ENCODE measurements at regions of chr5 and their contacts with region 1.

Region 1: GRCh38 chr5:181260387-181261319 is at the start of gene TRIM52:
- DNase-seq: peak; percentile 89 to 92
- ATAC-seq: peak; percentile 81 to 89
- H3K4me3 ChIP-seq: peak within 1 kb of the TSS; percentile 88 to 100 (median 94)
- H3K27ac ChIP-seq: peak within 1 kb of the TSS; percentile 95 to 100 (median 99)
- H3K4me1 ChIP-seq: peaks cover 53 to 60% of the 10 kb centered on the region in 2 donors
- H3K27me3 ChIP-seq: no peaks in the 10 kb centered on the region
- CTCF ChIP-seq: no peak
- POLR2A ChIP-seq: peak; percentile 96
- total RNA-seq, gene TRIM52: 1.3 to 4.9 (median 3.4) TPM

Region 2: GRCh38 chr5:180494060-180494509 is 766.6 kb before region 1 on chr5 and contains the start of gene CNOT6:
- in situ Hi-C with region 1: no loop called
- intact Hi-C with region 1: loop called (anchors 10 kb)
- DNase-seq: peak; percentile 80 to 87
- ATAC-seq: peak; percentile 92 to 94
- H3K4me3 ChIP-seq: peak within 1 kb of the TSS; percentile 69 to 93 (median 82)
- H3K27ac ChIP-seq: peak within 1 kb of the TSS; percentile 69 to 92 (median 80)
- H3K4me1 ChIP-seq: peaks cover 22 to 29% of the 10 kb centered on the region in 2 donors
- H3K27me3 ChIP-seq: no peaks in the 10 kb centered on the region
- CTCF ChIP-seq: no peak
- POLR2A ChIP-seq: peak; percentile 23 to 61
- total RNA-seq, gene CNOT6: 4.1 to 12.0 (median 6.4) TPM

Region 3: DNA sequence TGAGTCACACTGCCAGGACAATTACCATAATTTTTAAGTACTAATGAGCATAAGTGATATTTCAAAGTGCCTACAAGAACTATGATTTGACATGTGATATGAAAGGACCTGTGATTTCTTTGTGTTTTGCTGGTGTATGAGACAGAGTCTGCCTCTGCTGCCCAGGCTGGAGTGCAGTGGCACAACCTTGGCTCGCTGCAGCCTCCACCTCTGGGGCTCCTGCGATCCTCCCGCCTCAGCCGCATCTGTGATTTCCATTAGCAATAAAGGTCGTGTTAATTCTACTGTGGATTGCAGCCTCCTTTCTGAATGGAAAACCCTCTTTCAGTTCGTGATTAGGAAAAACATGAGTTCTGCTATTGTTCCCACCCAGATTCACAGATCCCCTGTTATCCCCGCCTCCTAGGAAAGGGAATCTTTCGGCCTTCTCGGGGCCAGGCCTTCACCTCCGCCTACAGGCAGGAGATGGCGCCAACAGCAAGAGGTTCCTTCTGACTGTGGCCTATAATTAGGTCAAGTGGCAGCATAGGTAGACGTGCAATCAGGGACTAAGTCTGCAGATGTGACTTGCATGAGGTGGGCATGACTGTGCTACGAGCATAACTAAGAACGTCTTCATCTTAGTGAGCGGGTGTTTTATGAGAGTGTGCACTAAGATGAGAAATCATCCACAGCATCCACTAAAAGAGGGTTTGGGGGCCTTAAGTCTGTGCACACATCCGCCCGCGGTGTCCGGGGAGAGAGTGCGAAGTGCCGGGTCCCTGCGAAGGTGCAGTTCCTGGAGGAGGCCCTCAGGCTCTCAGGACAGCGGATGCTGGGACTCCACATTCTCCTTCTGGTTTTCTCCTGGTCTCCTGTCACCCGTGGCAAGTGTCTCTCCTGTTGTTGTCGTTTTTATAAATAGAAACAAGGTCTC is 78.7 kb before region 1 on chr5:
- in situ Hi-C with region 1: loop called in 2 of 4 experiments (anchors 10 kb)
- intact Hi-C with region 1: loop called (anchors 1 kb)
- DNase-seq: peak in 1 of 2 donors; percentile 70
- ATAC-seq: peak; percentile 88 to 89
- H3K4me3 ChIP-seq: no peak overlapping the region
- H3K27ac ChIP-seq: peak overlapping the region in 3 of 4 donors; percentile 28 to 48 (median 41)
- H3K4me1 ChIP-seq: peaks cover 4 to 7% of the 10 kb centered on the region in 2 donors
- H3K27me3 ChIP-seq: no peaks in the 10 kb centered on the region
- CTCF ChIP-seq: peak; percentile 76 to 88 (median 79)
- POLR2A ChIP-seq: no peak

Region 4: DNA sequence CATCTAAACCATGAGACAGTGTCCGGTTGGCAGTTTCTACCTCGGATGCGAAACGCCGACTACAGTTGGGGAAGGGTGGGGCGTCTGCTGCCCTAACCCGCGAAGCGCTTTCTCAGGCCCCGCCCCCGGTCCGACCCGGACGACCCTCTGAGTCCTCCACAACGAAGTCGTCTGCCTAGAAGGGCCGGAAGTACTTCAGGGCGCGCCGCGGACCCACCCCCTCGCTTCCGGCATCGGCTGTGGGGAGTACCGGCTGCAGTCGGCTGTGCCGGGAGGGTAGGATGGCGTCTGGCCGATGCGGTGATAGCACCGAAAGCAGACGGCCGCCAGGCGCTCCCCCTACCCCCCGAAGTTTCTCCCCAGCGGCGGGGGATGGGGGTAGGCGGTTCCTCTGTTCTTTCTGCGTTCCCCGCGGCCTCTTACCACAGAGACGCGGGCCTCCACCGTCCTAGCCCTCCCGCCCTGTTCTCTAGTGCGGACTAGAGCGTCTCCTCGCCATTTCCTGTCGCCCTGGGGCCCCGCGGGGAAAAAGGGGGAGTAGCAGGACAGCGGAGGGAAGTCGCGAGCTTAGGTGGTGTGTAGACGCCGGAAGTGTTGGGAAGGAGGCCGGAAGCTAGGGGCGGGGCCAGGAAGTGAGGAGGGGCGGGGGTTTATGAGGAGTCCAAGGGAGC is 37.5 kb before region 1 on chr5 and contains the start of gene TRIM41:
- in situ Hi-C with region 1: no loop called
- intact Hi-C with region 1: loop called (anchors 1 kb)
- DNase-seq: peak; percentile 98 to 99
- ATAC-seq: peak; percentile 82
- H3K4me3 ChIP-seq: peak within 1 kb of the TSS; percentile 76 to 95 (median 78)
- H3K27ac ChIP-seq: peak within 1 kb of the TSS; percentile 90 to 97 (median 92)
- H3K4me1 ChIP-seq: peaks cover 23 to 26% of the 10 kb centered on the region in 2 donors
- H3K27me3 ChIP-seq: no peaks in the 10 kb centered on the region
- CTCF ChIP-seq: peak in 1 of 5 experiments; percentile 3
- POLR2A ChIP-seq: peak; percentile 88 to 95
- total RNA-seq, gene TRIM41: 15.6 to 23.5 (median 21.6) TPM

Measured in gastrocnemius medialis (tissue), 4 donors.